HEK293 (cell line): ENCODE measurements at regions of chr12 and their contacts with region 1.

Region 1: GRCh38 chr12:56224102-56224701 is at the start of gene NABP2:
- H3K4me3 ChIP-seq: peak within 1 kb of the TSS; percentile 77
- H3K27ac ChIP-seq: peak within 1 kb of the TSS; percentile 64
- H3K4me1 ChIP-seq: peaks cover 12% of the 10 kb centered on the region; the same call in 1 of the 2 replicates
- CTCF ChIP-seq: peak; percentile 98

Region 2: DNA sequence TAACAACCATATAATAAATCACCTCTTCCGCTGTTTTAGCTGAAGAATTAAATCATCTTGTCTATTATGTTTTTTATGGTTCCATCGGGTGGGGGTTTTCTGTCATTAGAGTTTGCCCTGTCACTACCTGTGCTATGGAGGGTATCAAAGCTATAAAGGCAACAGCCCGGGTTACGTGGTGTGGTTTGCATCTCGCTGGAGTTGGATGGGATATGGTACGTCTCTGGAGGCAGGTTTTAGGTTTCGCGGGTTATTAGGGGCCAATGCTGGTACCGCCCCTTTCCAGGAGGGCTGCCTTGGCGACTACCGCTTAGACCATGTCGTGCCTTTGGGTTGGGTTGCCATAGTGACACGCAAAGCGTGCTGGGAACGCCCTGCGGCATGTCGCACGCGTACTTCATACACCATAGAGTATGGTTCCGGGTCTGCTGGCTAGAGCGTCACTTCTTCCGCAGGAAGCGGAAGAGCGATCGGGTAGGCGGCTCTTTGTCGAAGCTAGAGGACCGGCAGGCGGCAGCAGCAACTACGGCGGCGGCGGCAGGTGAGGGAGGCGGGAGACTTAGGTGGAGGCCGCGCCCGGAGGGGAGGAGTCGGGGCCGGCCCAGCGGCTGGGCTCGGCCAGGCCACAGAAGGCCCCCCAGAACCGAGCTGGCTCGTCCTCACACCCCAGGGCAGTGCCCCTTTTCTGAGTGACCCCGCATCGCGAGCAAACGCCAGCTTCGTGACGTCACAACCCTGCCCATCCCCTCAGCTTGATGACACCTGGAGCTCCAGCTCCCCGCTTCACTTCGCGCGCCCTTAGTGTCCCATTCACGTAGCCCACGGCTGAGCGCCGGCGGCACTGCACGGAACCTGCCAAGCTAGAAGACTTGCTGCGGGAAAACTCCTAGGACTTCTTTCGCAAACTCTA is 106.2 kb before region 1 on chr12 and contains the start of gene ZC3H10:
- CTCF ChIA-PET with region 1: interaction called, 21 read pairs
- POLR2A ChIA-PET with region 1: interaction called, 38 read pairs
- H3K4me3 ChIP-seq: peak within 1 kb of the TSS; percentile 78
- H3K27ac ChIP-seq: peak within 1 kb of the TSS; percentile 99
- H3K4me1 ChIP-seq: peaks cover 5% of the 10 kb centered on the region
- CTCF ChIP-seq: peak; percentile 99

Region 3: GRCh38 chr12:56189176-56189917 is 34.9 kb before region 1 on chr12 and contains the start of gene SMARCC2:
- CTCF ChIA-PET with region 1: interaction called, 39 read pairs
- POLR2A ChIA-PET with region 1: interaction called, 59 read pairs
- H3K4me3 ChIP-seq: peak within 1 kb of the TSS; percentile 87
- H3K27ac ChIP-seq: peak within 1 kb of the TSS; percentile 86
- H3K4me1 ChIP-seq: no peaks in the 10 kb centered on the region; the same call in 1 of the 2 replicates
- CTCF ChIP-seq: peak; percentile 92

Region 4: GRCh38 chr12:56234746-56235436 is 10.7 kb after region 1 on chr12:
- CTCF ChIA-PET with region 1: interaction called, 13 read pairs
- POLR2A ChIA-PET with region 1: interaction called, 17 read pairs
- H3K4me3 ChIP-seq: no peak overlapping the region
- H3K27ac ChIP-seq: no peak overlapping the region
- H3K4me1 ChIP-seq: no peaks in the 10 kb centered on the region
- CTCF ChIP-seq: no peak

Region 5: GRCh38 chr12:56299853-56300643 is 75.8 kb after region 1 on chr12 and contains the start of gene CS:
- CTCF ChIA-PET with region 1: interaction called, 3 read pairs
- POLR2A ChIA-PET with region 1: interaction called, 13 read pairs
- H3K4me3 ChIP-seq: peak within 1 kb of the TSS; percentile 92
- H3K27ac ChIP-seq: peak within 1 kb of the TSS; percentile 89
- H3K4me1 ChIP-seq: peaks cover 4% of the 10 kb centered on the region; the same call in 1 of the 2 replicates
- CTCF ChIP-seq: peak; percentile 23; the same call in 1 of the 2 replicates